Activated T-helper 1 cell treated with anti-CD3 and anti-CD28 coated beads, Interleukin-12 subunit alpha, Interleukin-12 subunit beta, Interleukin-2, Interleukin-4 antibody, amounts not matched to agents 30 ng/mL and 10 ng/mL and 1 ng/mL, durations not matched to agents 14 hours and 24 hours and 36 hours (primary cell): ENCODE measurements at regions of chr12 and their contacts with region 1.

Region 1: GRCh38 chr12:8949342-8950220 is at the start of gene M6PR:
- DNase-seq: peak; percentile 86
- H3K4me3 Mint-ChIP-seq: peak within 1 kb of the TSS; percentile 100
- H3K27ac Mint-ChIP-seq: peak within 1 kb of the TSS; percentile 92
- H3K4me1 Mint-ChIP-seq: peaks cover 72% of the 10 kb centered on the region
- H3K27me3 Mint-ChIP-seq: no peaks in the 10 kb centered on the region
- total RNA-seq, gene M6PR: 179 and 192 TPM in 2 replicates

Region 2: DNA sequence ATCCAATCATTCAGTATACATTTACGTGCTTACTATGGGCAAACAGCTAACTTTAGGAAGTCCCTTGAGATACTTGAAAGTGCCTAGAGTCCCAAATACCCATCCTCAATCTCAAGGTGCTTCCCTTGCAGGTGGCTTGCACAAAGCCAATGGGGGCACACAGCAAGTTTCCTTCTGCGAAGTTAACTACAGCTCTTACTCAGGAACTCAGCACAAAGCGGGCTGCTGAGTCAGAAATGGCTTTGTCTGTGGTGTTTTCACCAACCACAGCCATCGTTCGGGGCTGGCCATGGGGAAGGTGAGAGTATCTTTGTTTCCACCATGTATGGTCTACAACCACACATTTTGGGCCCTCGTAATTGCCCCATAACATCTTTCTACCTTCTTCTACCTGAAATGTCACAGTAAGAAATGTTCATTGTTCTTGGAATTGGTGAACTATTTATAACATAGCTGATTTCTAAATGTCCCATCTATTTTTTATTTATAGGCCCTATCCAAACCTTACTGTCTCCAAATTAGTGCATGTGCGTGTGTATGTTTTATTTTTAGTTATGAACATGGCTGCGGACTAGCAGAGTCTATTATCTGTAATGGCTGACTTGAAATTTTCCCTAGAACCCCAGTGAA is 300.9 kb before region 1 on chr12:
- intact Hi-C with region 1: loop called (anchors 2 kb)
- DNase-seq: peak; percentile 67
- H3K4me3 Mint-ChIP-seq: no peak overlapping the region
- H3K27ac Mint-ChIP-seq: peak overlapping the region; percentile 54
- H3K4me1 Mint-ChIP-seq: peaks cover 45% of the 10 kb centered on the region
- H3K27me3 Mint-ChIP-seq: peaks cover 53% of the 10 kb centered on the region

Region 3: GRCh38 chr12:8914716-8915526 is 34.7 kb before region 1 on chr12:
- intact Hi-C with region 1: loop called (anchors 1 kb)
- DNase-seq: peak; percentile 56
- H3K4me3 Mint-ChIP-seq: no peak overlapping the region
- H3K27ac Mint-ChIP-seq: no peak overlapping the region
- H3K4me1 Mint-ChIP-seq: peaks cover 8% of the 10 kb centered on the region
- H3K27me3 Mint-ChIP-seq: peaks cover 21% of the 10 kb centered on the region

Region 4: DNA sequence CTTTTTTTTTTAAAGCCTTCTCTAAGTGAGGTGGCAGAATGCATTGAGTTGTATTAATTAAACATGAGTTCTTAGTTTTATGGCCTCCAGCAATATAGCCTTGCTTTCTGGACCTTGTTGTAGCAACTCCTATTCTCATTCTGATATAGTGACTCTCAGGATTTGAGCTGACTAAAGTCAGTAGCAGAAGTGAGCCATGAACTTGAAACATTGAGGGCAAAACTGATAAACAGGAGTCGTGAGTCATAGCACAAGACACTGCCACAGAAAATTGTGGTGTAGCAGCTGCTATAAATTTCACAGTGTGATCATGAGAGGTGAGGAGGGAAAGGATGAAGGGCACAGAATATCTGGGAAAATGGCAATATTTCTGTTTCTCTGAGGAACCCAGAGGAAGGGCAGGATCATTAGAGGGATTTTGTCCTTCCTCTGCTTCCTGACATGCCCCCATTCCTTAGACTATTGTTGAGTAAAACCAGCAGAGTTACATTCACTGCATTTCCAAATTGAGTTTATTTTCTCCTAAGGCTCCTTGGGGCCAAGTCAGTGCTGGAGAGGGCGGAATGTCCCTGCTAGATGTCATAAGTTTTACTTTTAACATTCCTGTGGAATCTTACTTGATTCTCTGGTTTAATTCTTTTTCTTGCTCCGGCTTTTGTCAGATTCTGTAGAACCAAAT is 47.2 kb after region 1 on chr12:
- intact Hi-C with region 1: loop called (anchors 1 kb)
- DNase-seq: peak; percentile 6
- H3K4me3 Mint-ChIP-seq: no peak overlapping the region
- H3K27ac Mint-ChIP-seq: no peak overlapping the region
- H3K4me1 Mint-ChIP-seq: peaks cover 24% of the 10 kb centered on the region
- H3K27me3 Mint-ChIP-seq: peaks cover 14% of the 10 kb centered on the region

Region 5: GRCh38 chr12:9049520-9050133 is 100.0 kb after region 1 on chr12:
- intact Hi-C with region 1: loop called (anchors 1 kb)
- DNase-seq: no peak
- H3K4me3 Mint-ChIP-seq: no peak overlapping the region
- H3K27ac Mint-ChIP-seq: no peak overlapping the region
- H3K4me1 Mint-ChIP-seq: no peaks in the 10 kb centered on the region
- H3K27me3 Mint-ChIP-seq: peaks cover 18% of the 10 kb centered on the region